ENCODE measurements at regions of chr3 and their contacts with region 1.

Region 1: DNA sequence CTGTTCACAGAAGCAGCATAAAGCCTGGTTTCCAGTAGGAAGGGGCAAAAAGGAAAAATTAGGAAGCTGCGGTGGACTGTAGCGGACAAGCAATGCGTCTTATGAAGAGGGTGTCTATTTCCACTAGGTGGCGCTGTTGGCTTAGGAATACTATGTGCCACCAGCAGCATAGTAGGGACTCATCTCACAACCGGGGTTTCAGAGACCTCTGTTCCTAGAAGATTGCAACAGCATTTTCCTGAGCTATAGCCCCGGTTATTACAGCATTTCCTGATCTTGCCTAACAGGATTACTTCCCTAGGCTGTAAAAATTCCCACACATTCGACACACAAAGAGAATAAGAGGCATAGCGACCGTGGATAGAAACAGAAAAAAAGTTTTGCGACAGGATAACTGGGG is 683.0 kb downstream of the TBL1XR1 start:
- DNase-seq: peak; percentile 79 to 87 (median 80)
- ATAC-seq: peak; percentile 99
- H3K4me3 ChIP-seq: no peak overlapping the region
- H3K27ac ChIP-seq: no peak overlapping the region
- H3K4me1 ChIP-seq: no peaks in the 10 kb centered on the region
- H3K27me3 ChIP-seq: no peaks in the 10 kb centered on the region
- CTCF ChIP-seq: peak; percentile 72 to 85 (median 72)
- EP300 ChIP-seq: no peak
- POLR2A ChIP-seq: no peak
- RAD21 ChIP-seq: peak; percentile 94 to 95

Region 2: GRCh38 chr3:176663837-176664831 is 149.8 kb after region 1 on chr3:
- CTCF ChIA-PET with region 1: interaction called, 7 read pairs
- POLR2A ChIA-PET with region 1: interaction called, 3 read pairs
- in situ Hi-C with region 1: loop called (anchors 5 kb)
- intact Hi-C with region 1: loop called (anchors 1 kb)
- DNase-seq: peak in 2 of 4 experiments; percentile 18 to 67
- ATAC-seq: peak; percentile 77
- H3K4me3 ChIP-seq: no peak overlapping the region
- H3K27ac ChIP-seq: no peak overlapping the region
- H3K4me1 ChIP-seq: peaks cover 0 to 9% of the 10 kb centered on the region in 2 experiments; a peak in 2 of 5 replicates
- H3K27me3 ChIP-seq: no peaks in the 10 kb centered on the region
- CTCF ChIP-seq: peak; percentile 30 to 66 (median 58); a peak in 5 of 6 replicates
- EP300 ChIP-seq: no peak
- POLR2A ChIP-seq: no peak
- RAD21 ChIP-seq: peak; percentile 80 to 86

Region 3: GRCh38 chr3:176814285-176814684 is 300.0 kb after region 1 on chr3:
- CTCF ChIA-PET with region 1: no interaction called
- POLR2A ChIA-PET with region 1: no interaction called
- in situ Hi-C with region 1: no loop called
- intact Hi-C with region 1: loop called (anchors 2 kb)
- DNase-seq: peak; percentile 9 to 74 (median 34)
- ATAC-seq: peak; percentile 100
- H3K4me3 ChIP-seq: no peak overlapping the region
- H3K27ac ChIP-seq: no peak overlapping the region
- H3K4me1 ChIP-seq: no peaks in the 10 kb centered on the region
- H3K27me3 ChIP-seq: no peaks in the 10 kb centered on the region
- CTCF ChIP-seq: peak; percentile 68 to 76 (median 71)
- EP300 ChIP-seq: no peak
- POLR2A ChIP-seq: no peak
- RAD21 ChIP-seq: peak; percentile 40 to 61

Region 4: DNA sequence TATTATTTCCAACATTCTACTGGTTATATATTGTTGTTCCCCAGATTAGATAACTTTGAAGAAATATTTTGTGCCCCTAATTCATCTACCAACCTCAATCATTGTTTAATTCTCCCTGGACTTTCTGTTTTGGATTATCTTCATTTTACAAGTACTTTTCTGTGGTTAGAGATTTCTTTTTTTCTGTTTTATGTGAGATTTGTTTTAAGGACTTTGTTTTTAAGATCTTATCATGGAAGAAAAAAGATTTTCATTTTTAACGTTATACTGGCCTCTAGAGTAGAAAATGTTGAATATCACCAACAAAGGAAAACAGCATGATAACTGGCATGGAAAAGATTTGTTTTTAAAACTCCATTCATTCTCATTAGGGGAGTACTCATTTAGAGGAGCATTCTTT is 1811.0 kb after region 1 on chr3:
- CTCF ChIA-PET with region 1: no interaction called
- POLR2A ChIA-PET with region 1: no interaction called
- in situ Hi-C with region 1: no loop called
- intact Hi-C with region 1: loop called (anchors 10 kb)
- DNase-seq: no peak
- ATAC-seq: 0 out of 3 replicates have a peak, but pooled peaks have one; percentile 39
- H3K4me3 ChIP-seq: no peak overlapping the region
- H3K27ac ChIP-seq: no peak overlapping the region
- H3K4me1 ChIP-seq: peaks cover 0 to 7% of the 10 kb centered on the region in 2 experiments; a peak in 2 of 5 replicates
- H3K27me3 ChIP-seq: no peaks in the 10 kb centered on the region
- CTCF ChIP-seq: peak in 2 of 3 experiments; percentile 24 to 58; a peak in 3 of 6 replicates
- EP300 ChIP-seq: no peak
- POLR2A ChIP-seq: no peak
- RAD21 ChIP-seq: peak; percentile 80 to 84

Region 5: GRCh38 chr3:178385280-178385952 is 1871.1 kb after region 1 on chr3:
- CTCF ChIA-PET with region 1: interaction called, 4 read pairs
- POLR2A ChIA-PET with region 1: no interaction called
- in situ Hi-C with region 1: no loop called
- intact Hi-C with region 1: loop called (anchors 1 kb)
- DNase-seq: peak; percentile 16 to 48 (median 28)
- ATAC-seq: peak; percentile 66; the same call in 2 of the 3 replicates
- H3K4me3 ChIP-seq: no peak overlapping the region
- H3K27ac ChIP-seq: no peak overlapping the region
- H3K4me1 ChIP-seq: no peaks in the 10 kb centered on the region; a peak in 1 of 5 replicates
- H3K27me3 ChIP-seq: no peaks in the 10 kb centered on the region
- CTCF ChIP-seq: peak; percentile 29 to 77 (median 72); a peak in 5 of 6 replicates
- EP300 ChIP-seq: 0 out of 2 replicates have a peak, but pooled peaks have one; percentile 3
- POLR2A ChIP-seq: no peak
- RAD21 ChIP-seq: peak; percentile 91